A673 (cell line): ENCODE measurements at regions of chr2 and their contacts with region 1.

Region 1: DNA sequence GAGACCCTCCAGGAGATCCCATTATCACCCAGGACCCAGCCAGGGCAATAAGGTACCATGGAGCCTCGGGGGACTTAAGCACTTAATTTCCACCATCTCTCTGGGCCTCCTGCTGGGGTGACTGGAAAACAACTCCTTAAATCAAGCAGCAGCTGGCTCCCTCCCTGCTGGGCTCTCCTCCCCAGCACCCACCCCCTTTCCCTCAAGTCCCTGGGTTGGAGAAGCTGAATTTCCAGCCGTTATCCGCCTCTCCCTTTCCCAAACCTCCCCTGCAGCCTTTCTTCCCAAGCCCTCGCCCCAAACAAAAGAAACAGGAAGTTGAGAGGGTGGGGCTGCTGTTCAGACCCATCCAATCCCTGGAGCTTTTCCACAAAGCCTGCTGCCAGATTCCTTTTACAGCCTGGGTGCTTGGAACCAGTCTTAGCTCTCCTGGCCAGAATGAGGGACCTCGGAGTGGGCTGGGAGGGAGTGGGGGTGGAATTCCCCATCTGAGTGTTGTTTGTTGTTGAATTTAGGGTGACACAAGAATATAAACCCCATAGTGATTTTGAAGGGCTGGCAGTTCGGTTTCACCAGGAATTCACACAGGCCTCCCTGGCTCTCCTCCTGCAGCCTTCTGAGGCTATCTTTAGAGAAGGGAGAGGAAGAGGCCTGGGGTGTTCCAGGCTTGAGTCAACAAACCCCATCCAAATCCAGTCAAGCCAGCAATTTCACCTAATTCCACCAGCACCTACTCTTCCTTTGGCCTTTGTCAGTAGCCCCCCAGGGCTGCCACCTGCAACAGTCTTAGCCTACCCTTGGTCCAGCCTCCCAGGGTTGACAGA is 32.3 kb downstream of the MARCHF4 start:
- DNase-seq: peak; percentile 93
- H3K4me3 ChIP-seq: no peak overlapping the region
- H3K27ac ChIP-seq: peak overlapping the region; percentile 71
- H3K4me1 ChIP-seq: peaks cover 32% of the 10 kb centered on the region
- H3K27me3 ChIP-seq: no peaks in the 10 kb centered on the region
- CTCF ChIP-seq: no peak

Region 2: GRCh38 chr2:215931256-215931903 is 408.6 kb before region 1 on chr2:
- CTCF ChIA-PET with region 1: no interaction called
- POLR2A ChIA-PET with region 1: no interaction called
- intact Hi-C with region 1: no loop called
- DNase-seq: peak; percentile 87
- H3K4me3 ChIP-seq: no peak overlapping the region
- H3K27ac ChIP-seq: peak overlapping the region; percentile 9
- H3K4me1 ChIP-seq: peaks cover 16% of the 10 kb centered on the region
- H3K27me3 ChIP-seq: no peaks in the 10 kb centered on the region
- CTCF ChIP-seq: peak; percentile 96

Region 3: GRCh38 chr2:216287251-216287650 is 52.8 kb before region 1 on chr2:
- CTCF ChIA-PET with region 1: no interaction called
- POLR2A ChIA-PET with region 1: interaction called, 14 read pairs
- intact Hi-C with region 1: no loop called
- DNase-seq: peak; percentile 45
- H3K4me3 ChIP-seq: no peak overlapping the region
- H3K27ac ChIP-seq: no peak overlapping the region
- H3K4me1 ChIP-seq: peaks cover 3% of the 10 kb centered on the region
- H3K27me3 ChIP-seq: no peaks in the 10 kb centered on the region
- CTCF ChIP-seq: no peak

Region 4: DNA sequence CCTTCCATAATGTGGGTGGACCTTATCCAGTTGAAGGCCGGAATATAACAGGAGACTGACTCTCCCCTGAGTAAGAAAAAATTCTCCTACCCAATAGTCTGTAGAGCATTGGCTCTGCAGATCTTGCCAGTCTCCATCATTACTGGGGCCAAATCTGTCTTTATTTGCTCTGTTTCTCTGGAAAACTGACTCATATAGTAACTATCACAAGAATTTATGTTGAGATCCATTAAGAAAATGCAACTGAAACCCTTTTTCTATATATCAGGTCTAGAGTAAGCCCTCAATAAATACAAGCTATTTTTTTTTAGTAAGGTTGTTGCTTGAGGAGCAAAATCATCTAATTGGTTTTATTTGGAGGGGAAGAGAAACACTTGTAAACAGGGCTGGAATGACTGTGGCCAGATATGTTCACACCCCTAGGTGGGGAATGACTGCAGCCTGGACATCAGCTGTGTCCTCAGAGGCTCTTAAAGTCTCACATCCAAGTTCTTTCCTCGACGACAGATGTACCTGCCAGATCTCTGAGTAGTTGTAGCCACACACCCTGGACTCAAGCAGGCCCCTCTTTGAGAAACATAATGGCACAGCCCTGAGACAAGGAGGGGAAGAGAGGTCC is 1323.1 kb after region 1 on chr2:
- CTCF ChIA-PET with region 1: no interaction called
- POLR2A ChIA-PET with region 1: interaction called, 25 read pairs
- intact Hi-C with region 1: no loop called
- DNase-seq: no peak
- H3K4me3 ChIP-seq: no peak overlapping the region
- H3K27ac ChIP-seq: no peak overlapping the region
- H3K4me1 ChIP-seq: no peaks in the 10 kb centered on the region
- H3K27me3 ChIP-seq: no peaks in the 10 kb centered on the region
- CTCF ChIP-seq: no peak